Activated CD4-positive, alpha-beta T cell treated with anti-CD3 and anti-CD28 coated beads for 36 hours (primary cell): ENCODE measurements at regions of chr17 and their contacts with region 1.

Region 1: DNA sequence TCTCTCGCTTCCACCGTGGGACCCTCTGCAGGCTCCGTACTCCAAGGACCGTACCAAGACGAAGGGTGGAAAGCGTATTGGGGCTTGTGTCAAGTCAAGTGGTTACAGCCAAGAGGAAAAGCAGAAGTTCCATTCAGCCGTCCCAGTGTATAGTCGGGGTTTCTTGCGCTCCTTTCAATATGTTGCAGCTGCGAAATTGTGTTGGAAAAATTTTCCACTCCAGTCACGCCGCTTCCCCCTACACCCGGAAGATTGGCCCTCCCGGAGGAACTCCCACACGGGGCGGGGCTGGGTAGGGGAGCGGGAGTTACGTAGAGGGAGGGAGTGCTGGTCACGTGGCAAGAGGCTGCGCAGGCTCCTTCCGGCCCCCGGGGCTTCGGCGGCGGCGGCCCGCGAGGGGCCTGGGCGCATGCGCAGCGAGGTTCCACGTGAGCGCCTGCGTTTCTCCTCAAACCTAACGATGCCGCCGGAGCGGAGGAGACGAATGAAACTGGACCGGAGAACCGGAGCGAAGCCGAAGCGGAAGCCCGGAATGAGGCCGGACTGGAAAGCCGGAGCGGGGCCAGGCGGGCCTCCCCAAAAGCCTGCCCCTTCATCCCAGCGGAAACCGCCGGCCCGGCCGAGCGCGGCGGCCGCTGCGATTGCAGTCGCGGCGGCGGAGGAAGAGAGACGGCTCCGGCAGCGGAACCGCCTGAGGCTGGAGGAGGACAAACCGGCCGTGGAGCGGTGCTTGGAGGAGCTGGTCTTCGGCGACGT is at the start of gene UTP18:
- DNase-seq: peak; percentile 98
- ATAC-seq: peak; percentile 84
- H3K4me3 Mint-ChIP-seq: peak within 1 kb of the TSS; percentile 84
- H3K27ac Mint-ChIP-seq: peak within 1 kb of the TSS; percentile 97
- H3K4me1 Mint-ChIP-seq: peaks cover 61% of the 10 kb centered on the region
- H3K27me3 Mint-ChIP-seq: no peaks in the 10 kb centered on the region
- total RNA-seq, gene UTP18: 49.3 to 74.0 TPM

Region 2: DNA sequence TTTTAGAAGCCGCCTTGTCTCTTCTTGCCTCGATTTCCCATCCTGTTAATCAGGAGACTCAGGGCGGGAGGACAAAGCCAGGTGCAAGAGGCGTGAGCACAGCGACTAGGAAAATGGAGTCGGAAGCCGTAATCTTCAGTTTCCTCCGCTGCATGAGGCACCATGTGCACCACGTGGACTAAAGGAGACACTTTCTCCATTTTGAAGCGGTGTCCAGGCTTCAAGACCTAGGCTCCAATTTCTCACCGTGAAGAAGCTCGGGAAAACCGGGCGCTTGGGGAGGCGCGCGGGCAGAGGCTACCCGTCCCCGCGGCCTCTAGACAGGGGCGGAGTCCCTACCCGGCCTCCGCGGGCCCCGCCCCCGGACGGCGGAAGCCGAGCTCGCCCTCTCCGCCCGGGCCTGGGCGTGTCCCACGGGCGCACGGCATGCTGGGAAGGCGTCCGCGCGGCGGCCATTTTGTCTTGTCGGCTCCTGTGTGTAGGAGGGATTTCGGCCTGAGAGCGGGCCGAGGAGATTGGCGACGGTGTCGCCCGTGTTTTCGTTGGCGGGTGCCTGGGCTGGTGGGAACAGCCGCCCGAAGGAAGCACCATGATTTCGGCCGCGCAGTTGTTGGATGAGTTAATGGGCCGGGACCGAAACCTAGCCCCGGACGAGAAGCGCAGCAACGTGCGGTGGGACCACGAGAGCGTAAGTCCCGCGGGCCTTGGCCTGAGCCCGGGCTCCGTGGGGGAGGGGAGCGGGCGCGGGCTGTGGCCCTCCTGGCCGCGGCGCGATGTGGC is 541.0 kb before region 1 on chr17 and contains the start of gene LUC7L3:
- CTCF ChIA-PET with region 1: no interaction called
- POLR2A ChIA-PET with region 1: no interaction called
- intact Hi-C with region 1: loop called in 1 of 2 experiments (anchors 5 kb)
- DNase-seq: peak; percentile 97
- ATAC-seq: peak; percentile 89
- H3K4me3 Mint-ChIP-seq: peak within 1 kb of the TSS; percentile 87
- H3K27ac Mint-ChIP-seq: peak within 1 kb of the TSS; percentile 99
- H3K4me1 Mint-ChIP-seq: peaks cover 22% of the 10 kb centered on the region
- H3K27me3 Mint-ChIP-seq: no peaks in the 10 kb centered on the region
- total RNA-seq, gene LUC7L3: 112 to 120 TPM

Region 3: DNA sequence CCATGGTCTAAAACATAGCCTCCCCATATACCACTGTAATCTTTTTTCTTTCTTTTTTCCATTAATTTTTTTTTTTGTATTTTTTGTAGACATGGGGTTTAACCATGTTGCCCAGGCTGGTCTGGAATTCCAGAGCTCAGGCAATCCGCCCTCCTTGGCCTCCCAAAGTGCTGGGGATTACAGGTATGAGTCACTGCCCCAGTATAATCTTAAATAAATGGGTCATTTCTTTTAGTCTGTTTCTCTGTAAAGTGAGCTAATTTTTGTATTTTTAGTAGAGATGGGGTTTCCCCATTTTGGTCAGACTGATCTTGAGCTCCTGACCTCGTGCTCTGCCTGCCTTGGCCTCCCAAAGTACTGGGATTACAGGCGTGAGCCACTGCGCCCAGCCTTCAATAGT is 112.7 kb before region 1 on chr17:
- CTCF ChIA-PET with region 1: no interaction called
- POLR2A ChIA-PET with region 1: interaction called, 11 read pairs
- intact Hi-C with region 1: no loop called
- DNase-seq: peak; percentile 25
- ATAC-seq: peak; percentile 38
- H3K4me3 Mint-ChIP-seq: no peak overlapping the region
- H3K27ac Mint-ChIP-seq: no peak overlapping the region
- H3K4me1 Mint-ChIP-seq: peaks cover 20% of the 10 kb centered on the region
- H3K27me3 Mint-ChIP-seq: no peaks in the 10 kb centered on the region

Region 4: GRCh38 chr17:51166197-51166986 is 93.9 kb before region 1 on chr17 and contains the start of gene NME2:
- CTCF ChIA-PET with region 1: interaction called, 3 read pairs
- POLR2A ChIA-PET with region 1: interaction called, 7 read pairs
- intact Hi-C with region 1: loop called (anchors 1 kb)
- DNase-seq: peak; percentile 80
- ATAC-seq: peak; percentile 76
- H3K4me3 Mint-ChIP-seq: peak within 1 kb of the TSS; percentile 79
- H3K27ac Mint-ChIP-seq: peak within 1 kb of the TSS; percentile 95
- H3K4me1 Mint-ChIP-seq: peaks cover 31% of the 10 kb centered on the region
- H3K27me3 Mint-ChIP-seq: no peaks in the 10 kb centered on the region
- total RNA-seq, gene NME2: 703 to 827 TPM

Region 5: DNA sequence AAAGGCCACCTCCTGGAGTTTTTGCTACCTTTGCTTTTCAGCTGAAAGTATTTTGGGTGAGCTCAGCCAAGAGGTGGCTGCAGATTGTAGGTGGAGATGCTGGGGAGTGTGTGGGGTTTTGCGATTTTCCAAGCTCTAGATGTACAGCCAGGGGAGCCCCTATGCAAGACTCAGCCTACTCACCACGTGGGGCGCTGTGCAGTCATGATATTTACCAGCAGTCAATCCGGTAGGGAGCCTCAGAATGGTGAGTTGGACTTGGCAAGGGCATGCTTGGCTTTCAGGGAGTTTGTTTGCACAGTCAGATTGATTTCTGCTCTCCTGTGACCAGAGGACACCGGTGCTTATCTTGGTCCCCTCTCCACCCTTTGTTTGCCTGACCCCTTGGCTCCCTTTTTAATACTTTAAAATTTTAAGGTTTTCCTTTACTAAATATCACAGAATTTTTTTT is 175.4 kb after region 1 on chr17:
- CTCF ChIA-PET with region 1: no interaction called
- POLR2A ChIA-PET with region 1: no interaction called
- intact Hi-C with region 1: loop called in 1 of 2 experiments (anchors 2 kb)
- DNase-seq: peak; percentile 71
- ATAC-seq: peak; percentile 68
- H3K4me3 Mint-ChIP-seq: peak overlapping the region; percentile 13
- H3K27ac Mint-ChIP-seq: no peak overlapping the region
- H3K4me1 Mint-ChIP-seq: peaks cover 37% of the 10 kb centered on the region
- H3K27me3 Mint-ChIP-seq: no peaks in the 10 kb centered on the region

Region 6: DNA sequence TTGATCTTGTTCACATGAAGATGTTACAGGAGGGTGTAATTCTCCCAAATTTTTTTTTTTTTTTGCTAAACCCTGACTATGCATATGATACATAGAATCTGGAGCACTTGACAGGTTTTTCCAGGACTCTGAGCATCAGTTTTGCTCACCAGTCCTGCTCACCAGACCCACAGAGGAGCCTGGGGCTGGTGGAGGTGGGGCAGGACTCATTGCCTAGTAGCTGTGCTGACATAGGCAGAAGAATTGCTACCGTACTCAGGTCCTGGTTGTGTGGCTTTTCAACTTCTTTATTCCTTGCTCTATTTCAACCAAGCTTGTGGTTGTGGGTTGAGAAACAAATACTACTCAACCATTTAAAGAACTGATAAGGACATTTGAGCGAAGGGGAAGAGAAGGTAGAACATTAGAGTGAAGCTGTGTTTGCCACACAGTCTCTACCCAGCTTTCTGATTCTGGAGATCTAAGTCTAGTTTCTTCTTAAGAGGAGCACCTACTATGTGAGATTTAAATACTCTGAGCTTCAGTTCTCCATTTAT is 212.4 kb after region 1 on chr17:
- CTCF ChIA-PET with region 1: no interaction called
- POLR2A ChIA-PET with region 1: no interaction called
- intact Hi-C with region 1: no loop called
- DNase-seq: no peak
- ATAC-seq: no peak
- H3K4me3 Mint-ChIP-seq: no peak overlapping the region
- H3K27ac Mint-ChIP-seq: no peak overlapping the region
- H3K4me1 Mint-ChIP-seq: no peaks in the 10 kb centered on the region
- H3K27me3 Mint-ChIP-seq: no peaks in the 10 kb centered on the region